ENCODE measurements at regions of chr6 and their contacts with region 1.

Region 1: DNA sequence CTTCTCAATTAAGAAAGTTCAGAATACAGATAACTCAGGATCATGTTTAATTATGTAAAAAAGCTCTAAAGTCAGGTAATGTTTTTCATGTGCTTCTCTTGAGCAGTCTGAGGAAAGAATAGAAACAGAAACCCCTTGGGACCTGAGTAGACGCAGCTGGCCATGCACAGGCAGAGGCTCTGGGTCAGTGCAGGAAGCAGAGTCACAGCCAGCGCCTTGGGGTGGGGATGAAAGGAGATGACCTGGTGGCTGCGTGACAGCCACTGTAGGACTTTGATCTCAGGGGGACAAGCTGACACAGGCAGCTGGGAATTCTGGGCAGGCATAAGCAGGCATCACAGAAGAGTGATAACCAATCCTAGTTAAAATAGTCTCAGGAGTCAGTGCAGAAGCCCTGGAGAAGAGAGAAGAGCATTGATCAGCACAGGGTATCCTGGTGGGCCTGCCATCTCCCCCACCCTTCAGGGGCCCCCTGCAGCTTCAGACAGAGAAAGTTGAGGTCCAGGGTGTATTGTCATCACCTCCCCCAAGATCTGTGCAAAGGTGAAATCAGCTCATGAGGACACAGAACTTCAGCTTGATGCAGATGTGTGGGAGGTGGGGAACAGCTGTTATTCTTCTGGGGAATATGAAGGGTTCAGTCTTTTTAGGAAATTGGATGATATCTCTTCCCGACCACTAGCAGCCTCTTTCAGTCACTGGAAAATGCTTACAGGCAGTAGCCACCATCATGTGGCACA is 6.4 kb downstream of the HLA-DQB1 start:
- DNase-seq: no peak
- ATAC-seq: peak; percentile 71
- H3K4me3 ChIP-seq: no peak overlapping the region
- H3K27ac ChIP-seq: peak overlapping the region; percentile 46; the same call in 1 of the 2 replicates
- H3K4me1 ChIP-seq: no peaks in the 10 kb centered on the region; the same call in 1 of the 2 replicates
- H3K27me3 ChIP-seq: no peaks in the 10 kb centered on the region
- CTCF ChIP-seq: no peak
- EP300 ChIP-seq: no peak
- POLR2A ChIP-seq: peak; percentile 35; the same call in 1 of the 2 replicates
- RAD21 ChIP-seq: no peak

Region 2: GRCh38 chr6:32551410-32551809 is 108.6 kb before region 1 on chr6:
- CTCF ChIA-PET with region 1: no interaction called
- POLR2A ChIA-PET with region 1: no interaction called
- RAD21 ChIA-PET with region 1: no interaction called
- SMC1A ChIA-PET with region 1: no interaction called
- in situ Hi-C with region 1: no loop called
- intact Hi-C with region 1: no loop called
- DNase-seq: no peak
- ATAC-seq: no peak
- H3K4me3 ChIP-seq: no peak overlapping the region
- H3K27ac ChIP-seq: no peak overlapping the region
- H3K4me1 ChIP-seq: no peaks in the 10 kb centered on the region; the same call in 1 of the 2 replicates
- H3K27me3 ChIP-seq: no peaks in the 10 kb centered on the region
- CTCF ChIP-seq: no peak
- EP300 ChIP-seq: no peak
- POLR2A ChIP-seq: 0 out of 2 replicates have a peak, but pooled peaks have one; percentile 35
- RAD21 ChIP-seq: no peak

Region 3: GRCh38 chr6:32642720-32643106 is 17.3 kb before region 1 on chr6:
- CTCF ChIA-PET with region 1: interaction called, 12 read pairs
- POLR2A ChIA-PET with region 1: interaction called, 168 read pairs
- RAD21 ChIA-PET with region 1: interaction called, 14 read pairs
- SMC1A ChIA-PET with region 1: interaction called, 8 read pairs
- in situ Hi-C with region 1: no loop called
- intact Hi-C with region 1: no loop called
- DNase-seq: no peak
- ATAC-seq: peak; percentile 45
- H3K4me3 ChIP-seq: no peak overlapping the region
- H3K27ac ChIP-seq: no peak overlapping the region
- H3K4me1 ChIP-seq: peaks cover 4% of the 10 kb centered on the region
- H3K27me3 ChIP-seq: no peaks in the 10 kb centered on the region
- CTCF ChIP-seq: peak in 1 of 3 experiments; percentile 2; a peak in 1 of 6 replicates
- EP300 ChIP-seq: no peak
- POLR2A ChIP-seq: peak; percentile 53; the same call in 1 of the 2 replicates
- RAD21 ChIP-seq: no peak

Region 4: DNA sequence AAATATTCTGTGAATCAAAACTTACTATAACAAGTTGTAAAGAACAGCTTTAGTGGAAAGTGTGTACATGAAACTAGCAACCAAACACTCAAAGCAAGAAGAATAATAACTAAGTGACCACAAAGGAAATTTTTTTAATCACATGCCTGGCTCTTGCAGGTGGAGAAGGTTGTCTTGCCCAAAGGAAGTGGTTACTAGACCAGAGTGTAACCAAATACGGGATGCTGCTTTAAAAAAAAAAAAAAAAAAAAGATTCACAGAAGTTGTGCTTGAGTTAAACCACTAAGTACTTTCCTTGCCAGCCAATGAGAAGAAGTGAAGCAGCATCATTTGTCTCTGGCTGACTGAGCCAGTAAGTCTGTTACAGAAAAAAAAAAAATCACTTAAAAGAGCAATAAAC is 25.6 kb after region 1 on chr6:
- CTCF ChIA-PET with region 1: interaction called, 3 read pairs
- POLR2A ChIA-PET with region 1: interaction called, 130 read pairs
- RAD21 ChIA-PET with region 1: interaction called, 13 read pairs
- SMC1A ChIA-PET with region 1: interaction called, 94 read pairs
- in situ Hi-C with region 1: no loop called
- intact Hi-C with region 1: no loop called
- DNase-seq: peak; percentile 95
- ATAC-seq: peak; percentile 89
- H3K4me3 ChIP-seq: no peak overlapping the region
- H3K27ac ChIP-seq: peak overlapping the region; percentile 40; the same call in 1 of the 2 replicates
- H3K4me1 ChIP-seq: peaks cover 16% of the 10 kb centered on the region; the same call in 1 of the 2 replicates
- H3K27me3 ChIP-seq: no peaks in the 10 kb centered on the region
- CTCF ChIP-seq: no peak
- EP300 ChIP-seq: peak; percentile 74 to 99; a peak in 3 of 4 replicates
- POLR2A ChIP-seq: no peak
- RAD21 ChIP-seq: no peak